ENCODE measurements at regions of chr12 and their contacts with region 1.

Region 1: GRCh38 chr12:131724534-131724933 is 13.6 kb downstream of the SFSWAP start:
- DNase-seq: peak; percentile 11
- ATAC-seq: no peak
- H3K4me3 ChIP-seq: no peak overlapping the region
- H3K27ac ChIP-seq: no peak overlapping the region
- H3K4me1 ChIP-seq: no peaks in the 10 kb centered on the region
- H3K27me3 ChIP-seq: no peaks in the 10 kb centered on the region
- CTCF ChIP-seq: no peak
- POLR2A ChIP-seq: no peak
- RAD21 ChIP-seq: no peak

Region 2: DNA sequence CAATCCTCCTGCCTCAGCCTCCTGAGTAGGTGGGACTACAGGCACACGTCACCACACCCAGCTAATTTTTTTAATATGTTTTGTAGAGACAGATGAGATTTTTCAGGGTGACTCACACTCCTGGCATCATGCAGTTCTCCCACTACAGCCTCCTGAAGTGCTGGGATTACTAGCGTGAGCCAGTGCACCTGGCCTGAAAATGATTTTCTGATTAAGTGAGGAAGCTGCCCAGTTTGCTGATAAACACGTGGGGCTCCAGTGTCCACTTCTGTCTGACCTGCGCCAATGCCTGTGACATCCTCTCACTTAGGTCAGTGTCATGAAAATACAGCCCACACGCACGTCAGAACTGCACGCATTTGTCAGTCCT is 50.7 kb before region 1 on chr12:
- CTCF ChIA-PET with region 1: no interaction called
- POLR2A ChIA-PET with region 1: no interaction called
- dilution Hi-C with region 1: no loop called
- in situ Hi-C with region 1: no loop called
- intact Hi-C with region 1: no loop called
- DNase-seq: peak; percentile 10
- ATAC-seq: no peak
- H3K4me3 ChIP-seq: no peak overlapping the region
- H3K27ac ChIP-seq: no peak overlapping the region
- H3K4me1 ChIP-seq: no peaks in the 10 kb centered on the region
- H3K27me3 ChIP-seq: peaks cover 4% of the 10 kb centered on the region; the same call in 1 of the 2 replicates
- CTCF ChIP-seq: no peak
- POLR2A ChIP-seq: no peak
- RAD21 ChIP-seq: no peak

Region 3: GRCh38 chr12:131684015-131684725 is 40.4 kb before region 1 on chr12:
- CTCF ChIA-PET with region 1: no interaction called
- POLR2A ChIA-PET with region 1: no interaction called
- dilution Hi-C with region 1: no loop called
- in situ Hi-C with region 1: no loop called
- intact Hi-C with region 1: no loop called
- DNase-seq: no peak
- ATAC-seq: no peak
- H3K4me3 ChIP-seq: no peak overlapping the region
- H3K27ac ChIP-seq: no peak overlapping the region
- H3K4me1 ChIP-seq: no peaks in the 10 kb centered on the region
- H3K27me3 ChIP-seq: no peaks in the 10 kb centered on the region
- CTCF ChIP-seq: no peak
- POLR2A ChIP-seq: no peak
- RAD21 ChIP-seq: no peak

Region 4: GRCh38 chr12:131755305-131756113 is 31.0 kb after region 1 on chr12:
- CTCF ChIA-PET with region 1: no interaction called
- POLR2A ChIA-PET with region 1: no interaction called
- dilution Hi-C with region 1: no loop called
- in situ Hi-C with region 1: no loop called
- intact Hi-C with region 1: loop called (anchors 2 kb)
- DNase-seq: peak; percentile 10
- ATAC-seq: peak; percentile 21; the same call in 1 of the 2 replicates
- H3K4me3 ChIP-seq: no peak overlapping the region
- H3K27ac ChIP-seq: no peak overlapping the region
- H3K4me1 ChIP-seq: no peaks in the 10 kb centered on the region
- H3K27me3 ChIP-seq: no peaks in the 10 kb centered on the region
- CTCF ChIP-seq: peak; percentile 9; the same call in 1 of the 2 replicates
- POLR2A ChIP-seq: no peak
- RAD21 ChIP-seq: no peak

Region 5: GRCh38 chr12:132593521-132594358 is 869.2 kb after region 1 on chr12:
- CTCF ChIA-PET with region 1: no interaction called
- POLR2A ChIA-PET with region 1: no interaction called
- dilution Hi-C with region 1: no loop called
- in situ Hi-C with region 1: no loop called
- intact Hi-C with region 1: no loop called
- DNase-seq: peak; percentile 84
- ATAC-seq: peak; percentile 95
- H3K4me3 ChIP-seq: no peak overlapping the region
- H3K27ac ChIP-seq: no peak overlapping the region
- H3K4me1 ChIP-seq: peaks cover 4% of the 10 kb centered on the region; the same call in 1 of the 2 replicates
- H3K27me3 ChIP-seq: peaks cover 5% of the 10 kb centered on the region; the same call in 1 of the 2 replicates
- CTCF ChIP-seq: no peak
- POLR2A ChIP-seq: no peak
- RAD21 ChIP-seq: no peak